Mammary epithelial cell (primary cell): ENCODE measurements at regions of chr2 and their contacts with region 1.

Region 1: GRCh38 chr2:199985625-199986207 is 30.3 kb downstream of the MAIP1 start:
- DNase-seq: peak; percentile 60
- H3K4me3 ChIP-seq: no peak overlapping the region
- H3K27ac ChIP-seq: no peak overlapping the region
- H3K4me1 ChIP-seq: peaks cover 13% of the 10 kb centered on the region
- H3K27me3 ChIP-seq: no peaks in the 10 kb centered on the region
- CTCF ChIP-seq: peak; percentile 76 to 86

Region 2: GRCh38 chr2:200319548-200320337 is 334.0 kb after region 1 on chr2:
- CTCF ChIA-PET with region 1: no interaction called
- dilution Hi-C with region 1: no loop called
- in situ Hi-C with region 1: loop called in 1 of 2 experiments (anchors 10 kb)
- intact Hi-C with region 1: loop called (anchors 5 kb)
- DNase-seq: peak; percentile 51
- H3K4me3 ChIP-seq: no peak overlapping the region
- H3K27ac ChIP-seq: peak overlapping the region; percentile 83
- H3K4me1 ChIP-seq: peaks cover 49% of the 10 kb centered on the region
- H3K27me3 ChIP-seq: no peaks in the 10 kb centered on the region
- CTCF ChIP-seq: no peak

Region 3: GRCh38 chr2:200677721-200678585 is 692.2 kb after region 1 on chr2:
- CTCF ChIA-PET with region 1: no interaction called
- dilution Hi-C with region 1: no loop called
- in situ Hi-C with region 1: loop called in 1 of 2 experiments (anchors 25 kb)
- intact Hi-C with region 1: no loop called
- DNase-seq: no peak
- H3K4me3 ChIP-seq: no peak overlapping the region
- H3K27ac ChIP-seq: no peak overlapping the region
- H3K4me1 ChIP-seq: no peaks in the 10 kb centered on the region
- H3K27me3 ChIP-seq: no peaks in the 10 kb centered on the region
- CTCF ChIP-seq: no peak